B cell (primary cell): ENCODE measurements at regions of chr16 and their contacts with region 1.

Region 1: DNA sequence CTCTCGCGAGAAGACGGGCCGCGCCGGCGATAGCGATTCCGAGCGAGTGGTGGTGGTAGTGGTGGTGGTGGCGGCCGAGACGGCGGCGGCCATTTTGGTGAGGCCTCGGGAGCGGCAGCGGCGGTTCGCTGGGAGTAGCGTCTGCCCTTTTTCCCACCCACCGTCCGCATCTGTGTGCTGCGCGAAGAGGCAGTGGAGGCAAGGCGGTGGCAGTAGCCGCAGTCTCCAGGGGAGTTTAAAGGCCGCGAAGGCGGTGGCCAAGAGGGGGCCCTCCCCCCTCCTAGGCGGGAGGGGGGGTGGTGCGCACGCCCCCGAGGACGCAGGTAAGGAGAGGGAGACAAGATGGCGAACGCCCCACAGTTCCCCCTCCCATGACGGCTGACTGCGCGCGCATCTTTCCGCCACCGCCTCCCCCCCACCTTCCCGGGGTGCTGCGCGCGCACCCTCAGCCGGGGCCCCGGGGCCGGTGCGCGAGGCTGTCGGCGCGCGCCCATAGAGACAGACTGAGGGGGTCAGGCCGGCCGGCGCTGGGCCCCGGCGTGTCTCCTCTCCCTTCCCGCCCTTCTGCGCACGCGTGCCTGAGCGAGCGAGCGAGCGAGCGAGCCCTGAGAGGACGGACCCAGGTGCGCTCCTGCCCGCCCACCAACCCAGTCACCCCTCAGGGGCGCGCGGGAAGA is 694 bp upstream of the SRCAP start:
- DNase-seq: peak; percentile 99
- ATAC-seq: peak; percentile 75
- H3K4me3 ChIP-seq: peak overlapping the region in 4 of 5 experiments; percentile 95 to 100 (median 97)
- H3K4me3 Mint-ChIP-seq: peak overlapping the region; percentile 95
- H3K27ac ChIP-seq: peak overlapping the region; percentile 100
- H3K27ac Mint-ChIP-seq: peak overlapping the region; percentile 100
- H3K4me1 ChIP-seq: peaks cover 19 to 25% of the 10 kb centered on the region in 2 donors
- H3K4me1 Mint-ChIP-seq: peaks cover 29% of the 10 kb centered on the region
- H3K27me3 ChIP-seq: no peaks in the 10 kb centered on the region
- H3K27me3 Mint-ChIP-seq: no peaks in the 10 kb centered on the region
- CTCF ChIP-seq: no peak

Region 2: DNA sequence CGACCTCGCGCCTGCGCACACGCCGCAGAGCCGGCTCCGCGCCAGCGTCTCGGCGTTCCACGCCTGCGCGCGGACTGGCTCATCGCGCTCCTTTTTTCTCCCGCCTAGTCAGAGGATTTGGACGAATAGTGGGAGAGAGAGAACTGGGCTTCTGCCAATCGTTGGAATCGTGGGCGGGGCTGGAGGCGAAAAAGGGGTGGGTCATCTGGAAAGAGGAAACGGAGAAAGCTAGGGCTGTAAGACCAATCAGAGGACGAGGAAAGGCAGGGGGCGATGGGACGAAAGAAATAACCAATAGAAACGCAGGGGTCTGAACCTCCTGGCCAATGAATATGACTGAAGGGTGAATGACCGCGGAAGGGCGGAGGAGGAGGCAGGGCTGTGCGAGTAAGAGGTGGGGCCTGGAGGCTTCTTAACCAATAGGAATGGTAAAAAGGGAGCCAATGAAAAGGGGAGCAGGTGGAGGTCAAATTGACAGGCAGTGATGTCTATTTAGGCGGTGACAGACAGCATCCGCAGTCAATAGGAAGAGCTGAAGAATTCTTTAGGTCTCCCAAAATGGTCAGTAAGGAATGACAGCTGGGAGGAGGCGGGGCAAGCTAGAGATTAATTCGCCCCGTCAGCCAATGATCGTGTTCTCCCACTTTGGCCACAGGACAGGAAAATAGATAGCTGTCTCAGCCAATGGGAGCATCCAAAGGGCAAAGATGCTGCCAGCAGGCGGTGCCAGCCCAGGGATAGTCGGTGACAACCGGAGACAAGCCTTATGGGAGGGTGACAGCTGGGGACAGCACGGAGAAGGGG is 327.6 kb before region 1 on chr16 and contains the start of gene TBC1D10B:
- CTCF ChIA-PET with region 1: no interaction called
- POLR2A ChIA-PET with region 1: no interaction called
- intact Hi-C with region 1: loop called (anchors 1 kb)
- DNase-seq: peak; percentile 99
- ATAC-seq: peak; percentile 82
- H3K4me3 ChIP-seq: peak within 1 kb of the TSS; percentile 47 to 77 (median 70)
- H3K4me3 Mint-ChIP-seq: peak within 1 kb of the TSS; percentile 86
- H3K27ac ChIP-seq: peak within 1 kb of the TSS; percentile 60 to 71
- H3K27ac Mint-ChIP-seq: peak within 1 kb of the TSS; percentile 90
- H3K4me1 ChIP-seq: peaks cover 25 to 35% of the 10 kb centered on the region in 2 donors
- H3K4me1 Mint-ChIP-seq: peaks cover 49% of the 10 kb centered on the region
- H3K27me3 ChIP-seq: no peaks in the 10 kb centered on the region
- H3K27me3 Mint-ChIP-seq: no peaks in the 10 kb centered on the region
- CTCF ChIP-seq: peak; percentile 26
- total RNA-seq, gene TBC1D10B: 53.0 and 58.0 TPM in 2 replicates

Region 3: GRCh38 chr16:30526823-30527635 is 171.2 kb before region 1 on chr16:
- CTCF ChIA-PET with region 1: no interaction called
- POLR2A ChIA-PET with region 1: interaction called, 3 read pairs
- intact Hi-C with region 1: loop called (anchors 2 kb)
- DNase-seq: peak; percentile 94
- ATAC-seq: peak; percentile 82
- H3K4me3 ChIP-seq: peak overlapping the region; percentile 59 to 97 (median 82)
- H3K4me3 Mint-ChIP-seq: peak overlapping the region; percentile 88
- H3K27ac ChIP-seq: peak overlapping the region; percentile 87 to 89
- H3K27ac Mint-ChIP-seq: peak overlapping the region; percentile 96
- H3K4me1 ChIP-seq: peaks cover 13 to 30% of the 10 kb centered on the region in 2 donors
- H3K4me1 Mint-ChIP-seq: peaks cover 20% of the 10 kb centered on the region
- H3K27me3 ChIP-seq: no peaks in the 10 kb centered on the region
- H3K27me3 Mint-ChIP-seq: no peaks in the 10 kb centered on the region
- CTCF ChIP-seq: peak; percentile 6

Region 4: DNA sequence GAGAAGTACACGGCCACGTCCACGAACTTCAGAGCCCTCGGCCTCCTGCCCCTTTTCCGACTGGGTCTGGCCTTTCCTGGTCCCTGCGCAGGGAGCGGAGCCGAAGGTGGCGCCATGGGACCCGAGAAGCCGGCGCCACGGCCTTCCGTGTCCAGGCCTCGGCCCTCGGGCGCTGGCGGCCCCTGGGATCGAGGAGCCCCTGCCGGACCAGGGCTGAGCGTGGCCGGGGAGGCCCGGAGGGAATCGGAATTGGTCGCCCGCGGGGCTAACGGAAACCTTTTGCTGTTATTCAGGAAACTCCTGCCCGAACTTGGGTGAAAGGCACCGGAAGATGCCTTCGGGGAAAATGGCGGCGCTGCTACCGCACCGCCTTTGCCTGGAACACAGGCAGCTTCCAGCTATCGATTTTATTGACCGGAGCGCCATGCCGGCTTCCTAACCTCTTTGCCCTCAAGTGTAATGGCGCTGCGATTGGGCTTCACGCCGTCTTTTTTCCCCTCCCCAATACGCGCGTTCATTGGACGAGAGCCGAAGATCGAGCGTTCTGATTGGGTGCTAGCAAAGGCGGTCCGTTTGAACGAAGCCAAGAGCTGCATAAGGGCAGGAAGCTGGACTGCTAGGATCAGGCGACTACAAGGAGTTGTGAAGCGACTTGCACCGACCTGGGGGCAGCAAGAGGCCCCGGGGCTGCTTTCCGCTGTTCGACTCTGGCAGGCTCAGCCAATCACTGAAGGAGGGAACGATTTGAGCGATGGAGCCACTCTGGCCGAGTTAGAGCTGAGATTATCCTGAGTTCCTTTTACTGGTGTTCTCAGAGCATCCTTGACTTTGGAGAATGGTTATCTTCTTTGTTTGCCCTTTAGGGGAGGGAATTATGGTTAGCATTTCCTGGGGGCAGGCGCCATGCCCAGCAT is 88.1 kb before region 1 on chr16 and contains the start of gene ZNF689:
- CTCF ChIA-PET with region 1: interaction called, 9 read pairs
- POLR2A ChIA-PET with region 1: no interaction called
- intact Hi-C with region 1: loop called (anchors 1 kb)
- DNase-seq: peak; percentile 97
- ATAC-seq: peak; percentile 88
- H3K4me3 ChIP-seq: peak within 1 kb of the TSS; percentile 84 to 98 (median 91)
- H3K4me3 Mint-ChIP-seq: peak within 1 kb of the TSS; percentile 98
- H3K27ac ChIP-seq: peak within 1 kb of the TSS; percentile 82 to 96
- H3K27ac Mint-ChIP-seq: peak within 1 kb of the TSS; percentile 96
- H3K4me1 ChIP-seq: peaks cover 14 to 24% of the 10 kb centered on the region in 2 donors
- H3K4me1 Mint-ChIP-seq: peaks cover 21% of the 10 kb centered on the region
- H3K27me3 ChIP-seq: no peaks in the 10 kb centered on the region
- H3K27me3 Mint-ChIP-seq: no peaks in the 10 kb centered on the region
- CTCF ChIP-seq: no peak
- total RNA-seq, gene ZNF689: 11.9 and 12.4 TPM in 2 replicates

Region 5: GRCh38 chr16:30747799-30748634 is 49.7 kb after region 1 on chr16 and contains the start of gene PHKG2:
- CTCF ChIA-PET with region 1: no interaction called
- POLR2A ChIA-PET with region 1: interaction called, 5 read pairs
- intact Hi-C with region 1: loop called (anchors 1 kb)
- DNase-seq: peak; percentile 98
- ATAC-seq: peak; percentile 99
- H3K4me3 ChIP-seq: peak within 1 kb of the TSS; percentile 22 to 84 (median 69)
- H3K4me3 Mint-ChIP-seq: peak within 1 kb of the TSS; percentile 92
- H3K27ac ChIP-seq: peak within 1 kb of the TSS; percentile 45 to 75
- H3K27ac Mint-ChIP-seq: peak within 1 kb of the TSS; percentile 93
- H3K4me1 ChIP-seq: peaks cover 3 to 5% of the 10 kb centered on the region in 2 donors
- H3K4me1 Mint-ChIP-seq: peaks cover 19% of the 10 kb centered on the region
- H3K27me3 ChIP-seq: no peaks in the 10 kb centered on the region
- H3K27me3 Mint-ChIP-seq: no peaks in the 10 kb centered on the region
- CTCF ChIP-seq: no peak
- total RNA-seq, gene PHKG2: 54.1 and 55.7 TPM in 2 replicates

Region 6: DNA sequence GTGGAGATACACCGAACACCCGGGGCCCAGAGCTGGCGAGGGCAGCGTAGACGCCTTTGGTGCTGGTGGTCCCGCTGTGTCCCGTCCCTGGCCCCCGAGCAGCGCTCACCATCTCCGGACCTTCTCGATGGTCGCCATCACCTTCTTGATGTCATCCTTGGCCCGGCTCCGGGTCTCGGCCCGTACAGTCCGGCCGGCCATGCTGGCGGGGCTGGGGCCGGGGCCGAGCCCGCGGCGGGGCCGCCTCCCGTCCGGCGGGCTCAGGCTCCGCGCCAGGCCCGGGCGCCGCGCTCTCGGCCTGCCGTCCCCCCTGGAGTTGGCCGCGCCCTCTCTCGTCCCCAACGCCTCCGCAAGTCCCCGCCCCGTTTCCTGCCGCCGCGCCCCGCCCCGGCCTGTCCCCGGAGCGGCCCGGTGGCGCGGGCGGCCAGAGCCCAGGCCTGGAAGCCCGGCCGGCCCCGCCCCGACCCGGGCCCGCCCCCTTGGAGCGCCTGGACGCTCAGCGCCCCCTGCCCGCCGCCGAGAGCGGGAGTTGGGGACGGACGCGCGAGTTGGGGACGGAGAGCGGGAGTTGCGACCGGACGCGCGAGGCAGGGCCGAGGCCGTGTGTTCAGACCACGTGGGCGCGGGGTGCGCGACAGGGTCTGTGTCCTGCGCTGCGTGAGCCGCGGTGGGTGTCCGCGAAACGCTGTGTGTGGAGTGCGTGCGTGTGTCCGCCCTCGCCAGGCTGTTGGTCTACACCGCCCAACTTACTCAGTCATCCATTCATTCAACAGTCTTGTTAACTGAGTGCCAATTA is 195.7 kb after region 1 on chr16 and contains the start of gene BCL7C:
- CTCF ChIA-PET with region 1: no interaction called
- POLR2A ChIA-PET with region 1: no interaction called
- intact Hi-C with region 1: loop called (anchors 1 kb)
- DNase-seq: peak; percentile 85
- ATAC-seq: peak; percentile 80
- H3K4me3 ChIP-seq: peak within 1 kb of the TSS; percentile 11 to 72 (median 65)
- H3K4me3 Mint-ChIP-seq: peak within 1 kb of the TSS; percentile 91
- H3K27ac ChIP-seq: peak within 1 kb of the TSS; percentile 63 to 79
- H3K27ac Mint-ChIP-seq: peak within 1 kb of the TSS; percentile 93
- H3K4me1 ChIP-seq: peaks cover 32 to 43% of the 10 kb centered on the region in 2 donors
- H3K4me1 Mint-ChIP-seq: peaks cover 48% of the 10 kb centered on the region
- H3K27me3 ChIP-seq: no peaks in the 10 kb centered on the region
- H3K27me3 Mint-ChIP-seq: no peaks in the 10 kb centered on the region
- CTCF ChIP-seq: no peak
- total RNA-seq, gene BCL7C: 30.5 and 31.6 TPM in 2 replicates

Region 7: GRCh38 chr16:31010585-31011325 is 312.5 kb after region 1 on chr16 and contains the start of gene STX1B:
- CTCF ChIA-PET with region 1: no interaction called
- POLR2A ChIA-PET with region 1: no interaction called
- intact Hi-C with region 1: no loop called
- DNase-seq: no peak
- ATAC-seq: peak; percentile 14
- H3K4me3 ChIP-seq: peak within 1 kb of the TSS in 1 of 5 experiments; percentile 26
- H3K4me3 Mint-ChIP-seq: peak within 1 kb of the TSS; percentile 67
- H3K27ac ChIP-seq: no peak within 1 kb of the TSS
- H3K27ac Mint-ChIP-seq: no peak within 1 kb of the TSS
- H3K4me1 ChIP-seq: peaks cover 6 to 10% of the 10 kb centered on the region in 2 donors
- H3K4me1 Mint-ChIP-seq: peaks cover 20% of the 10 kb centered on the region
- H3K27me3 ChIP-seq: peaks cover 0 to 37% (median 18%) of the 10 kb centered on the region in 4 experiments
- H3K27me3 Mint-ChIP-seq: peaks cover 40% of the 10 kb centered on the region
- CTCF ChIP-seq: no peak
- total RNA-seq, gene STX1B: 2.2 and 2.7 TPM in 2 replicates